ENCODE measurements at regions of chr3 and their contacts with region 1.

Region 1: DNA sequence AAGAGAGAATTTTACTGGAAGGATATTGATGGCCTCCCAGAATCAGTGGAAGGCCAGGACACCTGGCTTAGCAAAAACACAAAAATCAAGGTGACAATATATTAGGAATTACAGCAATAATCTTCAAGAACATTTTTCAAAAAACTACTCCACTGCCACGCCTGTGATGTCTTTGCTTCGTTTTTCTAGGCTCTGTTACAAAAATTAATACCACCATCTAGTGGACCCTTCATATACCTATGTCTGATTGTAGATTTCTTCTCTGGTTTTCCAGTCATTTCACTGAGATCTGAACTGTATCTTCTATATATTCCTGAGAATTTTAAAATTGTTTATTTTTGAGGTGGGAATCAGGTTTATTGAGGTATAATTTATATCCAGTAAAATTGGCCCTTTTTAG is 5.6 kb upstream of the SLC33A1 start:
- DNase-seq: peak; percentile 40
- H3K4me3 ChIP-seq: no peak overlapping the region
- H3K27ac ChIP-seq: no peak overlapping the region
- H3K4me1 ChIP-seq: peaks cover 4% of the 10 kb centered on the region
- CTCF ChIP-seq: peak; percentile 77

Region 2: DNA sequence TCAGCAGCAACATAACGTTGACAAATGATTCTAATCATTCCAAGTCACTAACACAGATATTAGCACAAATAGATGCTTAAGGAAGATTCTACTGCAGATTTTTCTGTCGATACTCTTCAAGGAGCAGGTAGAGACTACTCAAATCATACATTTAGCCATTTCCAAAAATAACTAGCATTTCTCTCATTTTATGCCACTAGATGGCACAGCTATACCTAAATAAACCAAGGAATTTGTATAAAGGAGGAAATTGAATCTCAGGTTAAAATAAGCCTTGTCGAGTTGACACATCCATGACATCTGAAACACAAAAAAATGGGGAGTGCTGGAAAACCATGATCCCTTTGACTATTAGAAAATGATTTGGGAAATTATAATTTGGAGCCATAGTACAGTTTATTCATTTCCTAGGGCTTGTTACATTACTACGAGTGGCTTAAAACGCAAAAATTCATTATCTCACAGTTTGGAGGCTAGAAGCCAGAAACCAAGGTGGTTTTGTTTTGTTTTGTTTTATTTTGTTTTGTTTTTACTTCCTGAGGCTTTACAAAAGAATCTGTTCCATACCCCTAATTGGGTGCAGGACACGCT is 506.9 kb before region 1 on chr3:
- CTCF ChIA-PET with region 1: no interaction called
- POLR2A ChIA-PET with region 1: no interaction called
- intact Hi-C with region 1: loop called (anchors 10 kb)
- DNase-seq: peak; percentile 67
- H3K4me3 ChIP-seq: no peak overlapping the region
- H3K27ac ChIP-seq: no peak overlapping the region
- H3K4me1 ChIP-seq: no peaks in the 10 kb centered on the region
- CTCF ChIP-seq: peak; percentile 85

Region 3: GRCh38 chr3:155441026-155441425 is 418.8 kb before region 1 on chr3:
- CTCF ChIA-PET with region 1: no interaction called
- POLR2A ChIA-PET with region 1: no interaction called
- intact Hi-C with region 1: no loop called
- DNase-seq: no peak
- H3K4me3 ChIP-seq: no peak overlapping the region
- H3K27ac ChIP-seq: no peak overlapping the region
- H3K4me1 ChIP-seq: no peaks in the 10 kb centered on the region
- CTCF ChIP-seq: no peak

Region 4: DNA sequence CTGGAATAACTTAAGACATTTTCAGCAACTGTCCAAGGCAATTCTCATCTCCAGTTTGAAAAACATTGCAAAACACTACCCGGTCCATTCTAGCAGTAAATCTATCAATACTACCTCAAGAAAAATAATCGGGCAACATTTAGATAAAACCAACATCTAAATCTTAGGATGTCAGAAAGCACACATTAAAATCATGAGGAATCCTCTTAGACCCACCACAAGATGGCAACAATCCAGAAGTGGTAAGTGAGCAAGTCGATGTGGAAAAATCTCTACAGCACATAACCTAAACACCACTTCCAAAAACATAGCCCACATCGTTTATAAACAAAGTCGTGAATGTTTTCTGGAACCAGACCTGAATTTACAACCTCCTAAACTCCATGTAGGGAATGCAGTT is 120.7 kb before region 1 on chr3:
- CTCF ChIA-PET with region 1: no interaction called
- POLR2A ChIA-PET with region 1: no interaction called
- intact Hi-C with region 1: loop called (anchors 1 kb)
- DNase-seq: peak; percentile 26
- H3K4me3 ChIP-seq: no peak overlapping the region
- H3K27ac ChIP-seq: no peak overlapping the region
- H3K4me1 ChIP-seq: no peaks in the 10 kb centered on the region
- CTCF ChIP-seq: peak; percentile 57